Posterior vena cava (tissue), 2 donors: ENCODE measurements at regions of chr3 and their contacts with region 1.

Region 1: DNA sequence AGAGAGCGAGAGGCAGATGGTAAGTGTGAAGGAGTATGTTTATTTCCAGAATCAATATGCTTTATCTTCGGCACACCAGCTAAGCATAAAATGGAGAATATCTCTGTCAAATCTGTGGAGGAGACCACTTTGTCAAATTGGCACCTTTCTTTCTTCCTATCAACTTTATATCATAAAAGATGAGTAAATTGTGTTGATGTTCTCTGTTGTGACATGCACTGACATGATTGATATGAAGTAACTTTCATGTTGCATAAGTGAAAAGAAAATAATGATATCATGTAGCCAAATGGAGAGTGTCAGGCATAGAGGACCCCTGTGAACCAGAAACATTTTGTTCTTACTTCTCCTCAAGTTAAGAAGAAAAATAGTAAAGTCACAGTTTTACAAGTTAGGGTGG is 753.8 kb downstream of the ZNF385D start:
- DNase-seq: no peak

Region 2: DNA sequence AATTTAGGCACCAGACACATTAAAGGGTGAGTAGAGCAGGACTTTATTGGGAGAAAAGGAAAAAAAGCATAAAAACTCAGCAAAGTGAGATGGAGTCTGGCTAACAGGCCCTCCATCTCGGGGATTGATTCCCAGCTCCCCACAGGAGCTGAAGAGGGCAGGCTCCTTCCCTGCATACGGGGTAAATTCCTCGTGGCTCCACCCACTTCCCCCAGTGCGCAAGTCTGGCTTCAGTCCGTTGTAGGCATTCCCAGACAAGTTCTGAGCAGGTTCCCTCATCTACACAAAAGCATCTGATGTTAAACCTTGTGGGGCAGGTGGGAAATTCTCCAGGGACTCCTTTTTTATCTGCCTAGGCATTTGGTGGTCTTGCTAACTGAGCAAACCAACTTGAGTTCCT is 31.2 kb after region 1 on chr3:
- intact Hi-C with region 1: loop called in 1 of 2 experiments (anchors 2 kb)
- DNase-seq: no peak

Region 3: DNA sequence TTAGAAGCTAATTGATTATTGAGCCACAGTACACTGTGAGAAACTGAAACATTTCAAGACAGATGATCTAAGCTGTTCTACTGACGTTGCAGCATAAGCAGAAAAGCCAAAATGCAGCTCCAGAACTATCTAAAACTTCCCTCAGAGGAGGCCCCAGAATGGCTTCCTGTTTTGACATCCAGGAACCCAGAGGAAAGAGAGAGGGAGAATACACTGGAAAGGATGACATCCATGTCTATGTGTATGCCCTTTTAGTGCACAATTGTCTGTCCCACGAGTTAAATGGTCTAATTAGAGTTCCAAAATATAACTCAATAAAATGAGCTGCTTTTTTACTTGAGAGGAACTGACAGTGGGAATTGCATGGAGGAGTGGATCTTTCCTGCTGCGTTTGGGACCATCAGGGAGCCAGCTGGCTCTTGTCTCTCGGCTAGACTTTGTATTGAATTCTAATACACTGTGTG is 65.7 kb after region 1 on chr3:
- intact Hi-C with region 1: no loop called
- DNase-seq: no peak

Region 4: GRCh38 chr3:21109056-21109455 is 111.9 kb after region 1 on chr3:
- intact Hi-C with region 1: no loop called
- DNase-seq: no peak